ENCODE measurements at regions of chr17 and their contacts with region 1.

Region 1: GRCh38 chr17:21284319-21285163 is at the start of gene MAP2K3:
- DNase-seq: peak; percentile 99
- H3K4me3 ChIP-seq: peak within 1 kb of the TSS; percentile 69 to 75 (median 74)
- H3K27ac ChIP-seq: peak within 1 kb of the TSS; percentile 99
- H3K4me1 ChIP-seq: peaks cover 48% of the 10 kb centered on the region
- H3K27me3 ChIP-seq: no peaks in the 10 kb centered on the region
- CTCF ChIP-seq: no peak
- POLR2A ChIP-seq: peak; percentile 82
- total RNA-seq, gene MAP2K3: 33.2 and 36.3 TPM in 2 replicates

Region 2: GRCh38 chr17:20935740-20936139 is 348.8 kb before region 1 on chr17:
- CTCF ChIA-PET with region 1: no interaction called
- POLR2A ChIA-PET with region 1: no interaction called
- dilution Hi-C with region 1: no loop called
- intact Hi-C with region 1: loop called (anchors 2 kb)
- DNase-seq: peak; percentile 91
- H3K4me3 ChIP-seq: peak overlapping the region in 1 of 3 experiments; percentile 52
- H3K27ac ChIP-seq: peak overlapping the region; percentile 93
- H3K4me1 ChIP-seq: peaks cover 33% of the 10 kb centered on the region
- H3K27me3 ChIP-seq: no peaks in the 10 kb centered on the region
- CTCF ChIP-seq: no peak
- POLR2A ChIP-seq: no peak

Region 3: GRCh38 chr17:21214015-21214776 is 70.3 kb before region 1 on chr17 and contains the start of gene TMEM11:
- CTCF ChIA-PET with region 1: interaction called, 4 read pairs
- POLR2A ChIA-PET with region 1: no interaction called
- dilution Hi-C with region 1: no loop called
- intact Hi-C with region 1: loop called (anchors 1 kb)
- DNase-seq: peak; percentile 97
- H3K4me3 ChIP-seq: peak within 1 kb of the TSS; percentile 73 to 96 (median 96)
- H3K27ac ChIP-seq: peak within 1 kb of the TSS; percentile 77
- H3K4me1 ChIP-seq: peaks cover 20% of the 10 kb centered on the region
- H3K27me3 ChIP-seq: no peaks in the 10 kb centered on the region
- CTCF ChIP-seq: peak in 1 of 2 donors; percentile 5
- POLR2A ChIP-seq: peak; percentile 58
- total RNA-seq, gene TMEM11: 27.4 and 28.8 TPM in 2 replicates

Region 4: GRCh38 chr17:21252796-21253645 is 31.5 kb before region 1 on chr17 and contains the start of gene NATD1:
- CTCF ChIA-PET with region 1: interaction called, 4 read pairs
- POLR2A ChIA-PET with region 1: no interaction called
- dilution Hi-C with region 1: no loop called
- intact Hi-C with region 1: loop called (anchors 1 kb)
- DNase-seq: peak; percentile 80
- H3K4me3 ChIP-seq: peak within 1 kb of the TSS; percentile 14 to 61 (median 40)
- H3K27ac ChIP-seq: no peak within 1 kb of the TSS
- H3K4me1 ChIP-seq: peaks cover 8% of the 10 kb centered on the region
- H3K27me3 ChIP-seq: no peaks in the 10 kb centered on the region
- CTCF ChIP-seq: no peak
- POLR2A ChIP-seq: no peak
- total RNA-seq, gene NATD1: 7.2 and 8.1 TPM in 2 replicates

Region 5: DNA sequence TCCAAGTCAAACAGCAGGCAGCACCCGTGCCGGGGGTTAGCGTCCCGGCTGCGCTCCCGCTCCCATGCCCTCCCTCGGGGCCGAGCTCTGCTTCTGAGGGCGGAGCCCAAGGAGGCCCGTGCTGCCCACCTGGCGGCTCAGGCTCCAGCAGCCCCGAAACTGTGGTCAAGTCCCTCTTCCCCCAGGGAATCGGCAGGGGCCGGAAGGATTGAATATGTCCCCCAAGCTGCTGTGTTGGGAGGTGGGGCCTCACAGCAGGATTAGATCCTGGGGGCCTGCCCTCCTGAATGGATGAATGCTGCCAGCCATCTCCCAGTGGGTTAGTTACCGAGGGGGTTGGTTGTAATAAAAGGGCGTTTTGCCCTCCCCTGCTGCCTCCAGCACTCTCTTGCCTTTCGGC is 33.9 kb after region 1 on chr17:
- CTCF ChIA-PET with region 1: interaction called, 4 read pairs
- POLR2A ChIA-PET with region 1: no interaction called
- dilution Hi-C with region 1: no loop called
- intact Hi-C with region 1: loop called (anchors 1 kb)
- DNase-seq: no peak
- H3K4me3 ChIP-seq: no peak overlapping the region
- H3K27ac ChIP-seq: no peak overlapping the region
- H3K4me1 ChIP-seq: no peaks in the 10 kb centered on the region
- H3K27me3 ChIP-seq: peaks cover 0 to under 1% of the 10 kb centered on the region in 2 experiments
- CTCF ChIP-seq: no peak
- POLR2A ChIP-seq: no peak

Region 6: DNA sequence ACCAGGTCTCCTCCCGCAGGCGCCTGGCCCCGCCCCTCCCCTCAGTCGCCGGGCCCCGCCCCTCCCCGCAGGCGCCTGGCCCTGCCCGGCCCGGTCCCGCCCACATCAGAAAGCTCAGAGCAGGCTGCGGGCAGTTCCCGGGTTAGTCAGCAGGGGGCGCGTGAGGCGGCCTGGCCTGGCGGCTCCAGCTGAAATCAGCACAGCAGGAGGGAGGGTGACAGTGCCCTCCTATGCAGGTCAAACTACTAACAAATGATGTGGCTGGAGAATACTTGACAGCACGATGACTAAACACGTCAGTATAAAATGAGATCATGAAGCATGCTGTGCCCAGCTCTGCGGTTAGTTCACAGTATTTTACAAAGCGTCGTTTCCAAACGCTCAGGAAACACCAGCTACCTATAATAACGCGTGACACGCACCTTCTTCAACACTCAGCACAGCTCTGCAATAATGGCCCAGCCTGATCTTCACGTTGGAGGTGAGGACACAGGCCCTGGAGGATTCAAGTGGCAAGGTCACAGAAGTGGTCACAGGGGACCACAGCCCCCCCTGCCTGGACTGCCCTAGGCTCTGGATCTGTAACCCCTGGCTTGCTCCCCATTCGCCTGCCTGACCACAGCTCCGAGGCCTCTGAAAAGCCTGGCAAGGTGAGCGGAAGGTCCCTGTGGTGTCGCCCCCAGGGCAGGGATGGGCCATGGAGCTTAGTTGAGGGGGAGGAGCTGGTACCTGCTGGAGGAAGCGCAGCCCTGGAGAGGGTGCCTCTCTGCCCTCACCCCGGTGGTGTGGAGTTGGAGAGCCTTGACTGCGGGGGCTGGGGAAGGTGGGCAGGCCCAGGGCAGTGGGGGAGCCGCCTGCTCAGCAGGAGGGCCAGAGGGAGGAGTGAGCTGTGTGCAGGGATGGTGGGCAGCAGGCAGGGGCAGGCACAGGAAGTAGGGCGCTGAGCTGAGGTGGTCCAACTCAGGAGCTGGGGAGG is 172.8 kb after region 1 on chr17:
- CTCF ChIA-PET with region 1: interaction called, 17 read pairs
- POLR2A ChIA-PET with region 1: no interaction called
- dilution Hi-C with region 1: no loop called
- intact Hi-C with region 1: loop called (anchors 1 kb)
- DNase-seq: peak; percentile 86
- H3K4me3 ChIP-seq: no peak overlapping the region
- H3K27ac ChIP-seq: no peak overlapping the region
- H3K4me1 ChIP-seq: peaks cover 4% of the 10 kb centered on the region
- H3K27me3 ChIP-seq: no peaks in the 10 kb centered on the region
- CTCF ChIP-seq: peak; percentile 73 to 93
- POLR2A ChIP-seq: no peak

Measured in endothelial cell of umbilical vein (primary cell).